Dendritic cell treated with granulocyte-macrophage colony-stimulating factor and Interleukin-4, amounts not matched to agents 40 ng/mL and 50 ng/mL, for 4 days (primary cell): ENCODE measurements at regions of chr2 and their contacts with region 1.

Region 1: DNA sequence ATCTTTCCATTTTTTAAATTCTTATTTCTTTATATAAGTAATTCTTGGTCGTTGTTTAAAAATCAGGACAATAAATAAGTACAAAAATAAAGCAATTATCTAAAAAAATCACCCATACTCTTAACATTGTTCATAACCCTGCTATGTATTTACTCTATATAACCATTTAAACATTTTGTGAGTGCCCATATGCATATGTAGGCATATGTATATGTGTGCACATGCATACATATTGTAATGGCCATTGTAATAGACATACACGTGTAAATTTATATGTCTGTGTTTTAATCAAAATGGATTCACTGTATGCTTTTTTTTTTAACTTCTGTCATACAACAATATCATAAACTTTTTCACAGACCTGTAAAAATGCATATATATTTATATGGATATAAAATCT is 25.6 kb downstream of the DNAJC10 start:
- H3K4me3 Mint-ChIP-seq: no peak overlapping the region
- H3K27ac Mint-ChIP-seq: no peak overlapping the region
- H3K4me1 Mint-ChIP-seq: no peaks in the 10 kb centered on the region
- H3K27me3 Mint-ChIP-seq: no peaks in the 10 kb centered on the region

Region 2: DNA sequence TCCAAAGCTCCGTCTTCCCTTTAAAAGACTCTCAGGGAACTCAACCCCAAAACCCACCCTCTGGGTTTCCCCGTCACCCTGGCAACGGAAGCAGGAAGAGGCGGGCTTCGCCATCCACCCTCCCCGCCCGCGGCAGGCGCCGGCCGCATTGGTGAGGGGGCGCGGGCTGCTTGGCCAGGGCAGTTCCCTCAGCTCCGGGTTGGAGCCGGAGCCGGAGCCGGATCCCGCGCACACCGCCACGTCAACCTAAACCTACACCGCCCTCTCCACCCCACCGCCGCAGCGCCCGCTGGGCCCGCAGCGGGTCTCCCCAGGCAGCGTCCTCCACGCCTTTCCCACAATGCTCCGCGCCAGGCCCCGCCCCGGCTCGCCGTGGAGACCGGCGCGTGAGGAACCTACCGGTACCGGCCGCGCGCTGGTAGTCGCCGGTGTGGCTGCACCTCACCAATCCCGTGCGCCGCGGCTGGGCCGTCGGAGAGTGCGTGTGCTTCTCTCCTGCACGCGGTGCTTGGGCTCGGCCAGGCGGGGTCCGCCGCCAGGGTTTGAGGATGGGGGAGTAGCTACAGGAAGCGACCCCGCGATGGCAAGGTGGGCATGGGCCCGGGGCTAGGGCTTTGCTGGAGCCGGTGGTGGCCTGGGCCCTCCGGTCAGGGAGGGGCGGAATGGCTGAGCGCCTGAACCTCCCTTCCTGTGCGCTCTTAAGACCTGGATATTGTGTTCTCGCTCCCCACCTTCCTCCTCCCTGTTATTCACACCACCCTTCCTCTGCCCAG is 25.5 kb before region 1 on chr2 and contains the start of gene DNAJC10:
- intact Hi-C with region 1: no loop called
- H3K4me3 Mint-ChIP-seq: no peak within 1 kb of the TSS
- H3K27ac Mint-ChIP-seq: no peak within 1 kb of the TSS
- H3K4me1 Mint-ChIP-seq: peaks cover 24% of the 10 kb centered on the region
- H3K27me3 Mint-ChIP-seq: no peaks in the 10 kb centered on the region

Region 3: GRCh38 chr2:182758379-182758778 is 16.8 kb after region 1 on chr2:
- intact Hi-C with region 1: loop called (anchors 2 kb)
- H3K4me3 Mint-ChIP-seq: no peak overlapping the region
- H3K27ac Mint-ChIP-seq: no peak overlapping the region
- H3K4me1 Mint-ChIP-seq: peaks cover 5% of the 10 kb centered on the region
- H3K27me3 Mint-ChIP-seq: no peaks in the 10 kb centered on the region